ENCODE measurements at regions of chr13 and their contacts with region 1.

Region 1: DNA sequence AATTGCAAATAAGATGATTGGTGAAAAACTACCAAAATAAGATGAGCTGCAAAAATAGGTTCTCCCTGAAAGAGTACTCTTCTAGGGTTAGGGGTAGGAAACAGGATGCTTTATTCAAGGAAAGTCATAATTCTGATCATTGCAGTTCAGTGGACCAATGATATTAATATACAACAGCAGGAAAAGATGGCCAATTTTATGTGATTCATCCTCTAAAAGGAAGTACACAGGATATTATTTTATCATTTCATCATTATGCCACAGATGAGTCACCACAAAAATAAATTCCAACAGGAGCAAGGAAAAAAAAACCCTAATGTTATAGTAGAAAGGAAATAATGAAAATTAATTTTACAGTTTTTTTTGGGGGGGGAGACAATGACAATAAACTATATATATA is 205.0 kb downstream of the NALCN start:
- DNase-seq: peak; percentile 72
- H3K4me3 ChIP-seq: no peak overlapping the region
- H3K27ac ChIP-seq: peak overlapping the region; percentile 62
- H3K4me1 ChIP-seq: peaks cover 31% of the 10 kb centered on the region
- H3K27me3 ChIP-seq: no peaks in the 10 kb centered on the region
- CTCF ChIP-seq: no peak
- POLR2A ChIP-seq: no peak

Region 2: GRCh38 chr13:101258071-101258470 is 46.8 kb after region 1 on chr13:
- CTCF ChIA-PET with region 1: no interaction called
- POLR2A ChIA-PET with region 1: no interaction called
- dilution Hi-C with region 1: no loop called
- intact Hi-C with region 1: loop called (anchors 1 kb)
- DNase-seq: peak; percentile 84
- H3K4me3 ChIP-seq: no peak overlapping the region
- H3K27ac ChIP-seq: peak overlapping the region; percentile 72
- H3K4me1 ChIP-seq: peaks cover 9% of the 10 kb centered on the region
- H3K27me3 ChIP-seq: no peaks in the 10 kb centered on the region
- CTCF ChIP-seq: no peak
- POLR2A ChIP-seq: no peak

Region 3: GRCh38 chr13:101382086-101382485 is 170.8 kb after region 1 on chr13:
- CTCF ChIA-PET with region 1: no interaction called
- POLR2A ChIA-PET with region 1: no interaction called
- dilution Hi-C with region 1: no loop called
- intact Hi-C with region 1: loop called (anchors 5 kb)
- DNase-seq: peak; percentile 24
- H3K4me3 ChIP-seq: no peak overlapping the region
- H3K27ac ChIP-seq: no peak overlapping the region
- H3K4me1 ChIP-seq: no peaks in the 10 kb centered on the region
- H3K27me3 ChIP-seq: no peaks in the 10 kb centered on the region
- CTCF ChIP-seq: no peak
- POLR2A ChIP-seq: no peak

Region 4: DNA sequence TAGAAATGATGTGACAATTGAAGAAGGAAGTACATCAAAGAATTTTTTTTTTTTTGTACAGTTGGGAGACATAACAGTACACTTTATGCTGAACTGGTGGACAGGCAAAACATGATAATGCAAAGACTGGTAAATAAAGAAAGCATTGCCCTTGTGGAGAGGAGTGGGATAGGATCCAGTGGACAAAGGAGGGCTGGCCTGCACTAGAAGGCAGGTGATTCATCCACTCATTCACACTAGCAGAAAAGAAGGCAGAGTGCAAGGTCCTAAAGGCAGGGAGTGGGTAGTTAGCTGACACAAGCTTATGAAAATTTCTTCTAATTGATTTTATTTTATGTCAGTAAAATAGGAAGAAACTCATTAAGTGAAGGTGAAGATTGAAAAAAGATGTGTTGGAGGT is 222.6 kb after region 1 on chr13:
- CTCF ChIA-PET with region 1: no interaction called
- POLR2A ChIA-PET with region 1: no interaction called
- dilution Hi-C with region 1: no loop called
- intact Hi-C with region 1: no loop called
- DNase-seq: no peak
- H3K4me3 ChIP-seq: no peak overlapping the region
- H3K27ac ChIP-seq: no peak overlapping the region
- H3K4me1 ChIP-seq: no peaks in the 10 kb centered on the region
- H3K27me3 ChIP-seq: no peaks in the 10 kb centered on the region
- CTCF ChIP-seq: no peak
- POLR2A ChIP-seq: no peak